Endothelial cell of umbilical vein (primary cell): ENCODE measurements at regions of chr20 and their contacts with region 1.

Region 1: GRCh38 chr20:47379433-47380150 is 23.1 kb upstream of the ZMYND8 start:
- DNase-seq: no peak
- H3K4me3 ChIP-seq: no peak overlapping the region
- H3K27ac ChIP-seq: no peak overlapping the region
- H3K4me1 ChIP-seq: peaks cover 5% of the 10 kb centered on the region
- H3K27me3 ChIP-seq: no peaks in the 10 kb centered on the region
- CTCF ChIP-seq: no peak
- POLR2A ChIP-seq: no peak

Region 2: GRCh38 chr20:47196091-47197081 is 183.2 kb before region 1 on chr20:
- CTCF ChIA-PET with region 1: interaction called, 83 read pairs
- POLR2A ChIA-PET with region 1: no interaction called
- dilution Hi-C with region 1: no loop called
- intact Hi-C with region 1: loop called (anchors 1 kb)
- DNase-seq: peak; percentile 63
- H3K4me3 ChIP-seq: no peak overlapping the region
- H3K27ac ChIP-seq: no peak overlapping the region
- H3K4me1 ChIP-seq: peaks cover 3% of the 10 kb centered on the region
- H3K27me3 ChIP-seq: peaks cover 0 to 2% of the 10 kb centered on the region in 2 experiments
- CTCF ChIP-seq: peak; percentile 95 to 98
- POLR2A ChIP-seq: no peak

Region 3: GRCh38 chr20:47241345-47241781 is 138.2 kb before region 1 on chr20:
- CTCF ChIA-PET with region 1: interaction called, 18 read pairs
- POLR2A ChIA-PET with region 1: no interaction called
- dilution Hi-C with region 1: no loop called
- intact Hi-C with region 1: no loop called
- DNase-seq: no peak
- H3K4me3 ChIP-seq: no peak overlapping the region
- H3K27ac ChIP-seq: no peak overlapping the region
- H3K4me1 ChIP-seq: no peaks in the 10 kb centered on the region
- H3K27me3 ChIP-seq: no peaks in the 10 kb centered on the region
- CTCF ChIP-seq: no peak
- POLR2A ChIP-seq: no peak

Region 4: GRCh38 chr20:47290008-47290407 is 89.6 kb before region 1 on chr20:
- CTCF ChIA-PET with region 1: interaction called, 110 read pairs
- POLR2A ChIA-PET with region 1: no interaction called
- dilution Hi-C with region 1: no loop called
- intact Hi-C with region 1: no loop called
- DNase-seq: no peak
- H3K4me3 ChIP-seq: no peak overlapping the region
- H3K27ac ChIP-seq: no peak overlapping the region
- H3K4me1 ChIP-seq: peaks cover 2% of the 10 kb centered on the region
- H3K27me3 ChIP-seq: no peaks in the 10 kb centered on the region
- CTCF ChIP-seq: no peak
- POLR2A ChIP-seq: no peak

Region 5: DNA sequence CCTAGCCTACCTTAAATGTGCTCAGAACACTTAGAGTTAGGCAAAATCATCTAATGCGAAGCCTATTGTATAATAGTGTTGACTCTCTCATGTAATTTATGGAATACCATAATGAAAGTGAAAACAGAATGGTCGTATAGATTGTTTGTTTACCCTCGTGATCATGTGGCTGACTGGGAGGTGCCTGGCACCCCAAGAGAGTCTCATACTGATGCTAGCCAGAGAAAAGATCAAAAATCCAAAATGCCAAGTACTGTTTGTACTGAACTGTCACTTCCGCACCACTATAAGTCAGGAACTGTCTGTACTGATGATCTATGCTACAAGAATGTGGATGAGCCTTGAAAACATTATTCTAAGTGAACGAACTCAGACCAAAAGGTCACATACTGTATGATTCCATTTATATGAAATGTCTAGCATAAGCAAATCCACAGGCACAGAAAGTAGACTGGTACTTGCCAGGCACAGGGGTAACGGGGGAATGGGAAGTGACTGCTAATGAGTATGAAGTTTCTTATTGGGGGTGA is 45.5 kb before region 1 on chr20:
- CTCF ChIA-PET with region 1: interaction called, 58 read pairs
- POLR2A ChIA-PET with region 1: no interaction called
- dilution Hi-C with region 1: no loop called
- intact Hi-C with region 1: loop called (anchors 1 kb)
- DNase-seq: peak; percentile 96
- H3K4me3 ChIP-seq: peak overlapping the region in 1 of 3 experiments; percentile 58
- H3K27ac ChIP-seq: peak overlapping the region; percentile 56
- H3K4me1 ChIP-seq: peaks cover 56% of the 10 kb centered on the region
- H3K27me3 ChIP-seq: no peaks in the 10 kb centered on the region
- CTCF ChIP-seq: no peak
- POLR2A ChIP-seq: peak; percentile 87

Region 6: GRCh38 chr20:47392015-47392720 is 12.6 kb after region 1 on chr20:
- CTCF ChIA-PET with region 1: interaction called, 13 read pairs
- POLR2A ChIA-PET with region 1: no interaction called
- dilution Hi-C with region 1: no loop called
- intact Hi-C with region 1: no loop called
- DNase-seq: peak; percentile 85
- H3K4me3 ChIP-seq: no peak overlapping the region
- H3K27ac ChIP-seq: peak overlapping the region; percentile 91
- H3K4me1 ChIP-seq: peaks cover 12% of the 10 kb centered on the region
- H3K27me3 ChIP-seq: no peaks in the 10 kb centered on the region
- CTCF ChIP-seq: no peak
- POLR2A ChIP-seq: peak; percentile 53

Region 7: DNA sequence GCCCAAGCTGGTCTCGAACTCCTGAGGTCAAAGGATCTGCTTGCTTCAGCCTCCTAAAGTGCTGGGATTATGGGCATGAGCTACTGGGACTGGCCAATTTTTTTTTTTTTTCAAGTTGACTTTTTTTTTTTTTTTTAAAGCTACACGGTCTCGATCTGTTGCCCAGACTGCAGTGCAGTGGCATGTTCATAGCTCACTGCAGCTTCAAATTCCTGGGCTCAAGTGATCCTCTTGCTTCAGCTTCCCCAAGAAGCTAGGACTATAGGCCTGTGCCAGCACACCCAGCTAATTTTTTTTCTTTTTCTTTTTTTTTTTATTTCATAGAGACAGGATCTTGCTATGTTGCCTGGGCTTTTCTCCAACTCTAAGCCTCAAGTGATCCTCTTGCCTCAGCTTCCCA is 181.6 kb after region 1 on chr20:
- CTCF ChIA-PET with region 1: no interaction called
- POLR2A ChIA-PET with region 1: no interaction called
- dilution Hi-C with region 1: no loop called
- intact Hi-C with region 1: no loop called
- DNase-seq: no peak
- H3K4me3 ChIP-seq: no peak overlapping the region
- H3K27ac ChIP-seq: no peak overlapping the region
- H3K4me1 ChIP-seq: no peaks in the 10 kb centered on the region
- H3K27me3 ChIP-seq: no peaks in the 10 kb centered on the region
- CTCF ChIP-seq: no peak
- POLR2A ChIP-seq: no peak

Region 8: DNA sequence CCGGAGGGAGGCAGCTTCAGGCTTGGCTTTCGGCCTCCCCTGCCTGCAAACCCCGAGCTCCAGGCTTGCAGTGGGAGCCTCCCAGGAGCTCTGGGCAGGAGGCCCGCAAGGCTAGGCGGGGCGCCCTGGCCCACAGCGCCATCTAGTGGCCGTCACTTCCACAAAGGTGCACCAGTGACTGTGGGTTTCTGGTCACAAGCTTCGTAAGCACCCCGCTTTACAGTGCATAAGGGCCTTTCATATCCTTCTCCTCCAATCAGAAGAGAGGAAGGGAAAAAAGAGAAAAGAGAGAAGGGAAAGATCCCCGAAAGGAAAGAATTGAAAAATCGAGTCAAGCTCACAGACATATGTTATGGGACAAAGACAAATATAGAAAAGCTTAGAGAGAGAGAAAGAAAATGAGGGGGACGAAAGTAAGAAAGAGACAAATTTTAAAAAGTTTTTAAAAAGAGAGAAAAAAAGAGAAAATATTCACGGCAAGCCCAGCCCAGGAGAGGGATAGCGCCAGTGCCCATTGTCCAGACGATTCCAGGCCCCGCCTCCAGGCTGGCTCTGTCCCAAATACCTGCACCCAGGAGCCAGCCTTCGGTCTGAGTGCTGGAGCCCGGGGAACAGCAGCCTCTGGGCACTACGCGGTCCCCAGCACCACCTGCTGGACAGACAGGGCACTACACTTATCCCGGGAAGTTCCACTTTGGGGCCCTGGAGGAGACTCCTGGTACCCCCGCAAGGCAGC is 1241.1 kb after region 1 on chr20:
- CTCF ChIA-PET with region 1: interaction called, 13 read pairs
- POLR2A ChIA-PET with region 1: no interaction called
- dilution Hi-C with region 1: no loop called
- intact Hi-C with region 1: no loop called
- DNase-seq: peak; percentile 85
- H3K4me3 ChIP-seq: peak overlapping the region in 1 of 3 experiments; percentile 43
- H3K27ac ChIP-seq: peak overlapping the region; percentile 42
- H3K4me1 ChIP-seq: peaks cover 12% of the 10 kb centered on the region
- H3K27me3 ChIP-seq: no peaks in the 10 kb centered on the region
- CTCF ChIP-seq: peak; percentile 83 to 95
- POLR2A ChIP-seq: no peak